ENCODE measurements at regions of chr2 and their contacts with region 1.

Region 1: GRCh38 chr2:64653349-64654062 is at the start of gene SERTAD2:
- DNase-seq: peak; percentile 70 to 90
- H3K4me3 ChIP-seq: peak within 1 kb of the TSS; percentile 98
- H3K27ac ChIP-seq: peak within 1 kb of the TSS; percentile 87
- H3K4me1 ChIP-seq: peaks cover 56% of the 10 kb centered on the region
- H3K27me3 ChIP-seq: no peaks in the 10 kb centered on the region
- CTCF ChIP-seq: peak; percentile 41; the same call in 1 of the 2 replicates
- total RNA-seq, gene SERTAD2: 27.3 and 31.4 TPM in 2 replicates

Region 2: GRCh38 chr2:64595397-64596160 is 57.9 kb before region 1 on chr2:
- CTCF ChIA-PET with region 1: no interaction called
- POLR2A ChIA-PET with region 1: no interaction called
- intact Hi-C with region 1: no loop called
- DNase-seq: peak in 1 of 2 experiments; percentile 55
- H3K4me3 ChIP-seq: no peak overlapping the region
- H3K27ac ChIP-seq: 0 out of 2 replicates have a peak overlapping the region, but pooled peaks have one; percentile 44
- H3K4me1 ChIP-seq: peaks cover 32% of the 10 kb centered on the region
- H3K27me3 ChIP-seq: no peaks in the 10 kb centered on the region
- CTCF ChIP-seq: no peak; the same call in 1 of the 2 replicates

Region 3: DNA sequence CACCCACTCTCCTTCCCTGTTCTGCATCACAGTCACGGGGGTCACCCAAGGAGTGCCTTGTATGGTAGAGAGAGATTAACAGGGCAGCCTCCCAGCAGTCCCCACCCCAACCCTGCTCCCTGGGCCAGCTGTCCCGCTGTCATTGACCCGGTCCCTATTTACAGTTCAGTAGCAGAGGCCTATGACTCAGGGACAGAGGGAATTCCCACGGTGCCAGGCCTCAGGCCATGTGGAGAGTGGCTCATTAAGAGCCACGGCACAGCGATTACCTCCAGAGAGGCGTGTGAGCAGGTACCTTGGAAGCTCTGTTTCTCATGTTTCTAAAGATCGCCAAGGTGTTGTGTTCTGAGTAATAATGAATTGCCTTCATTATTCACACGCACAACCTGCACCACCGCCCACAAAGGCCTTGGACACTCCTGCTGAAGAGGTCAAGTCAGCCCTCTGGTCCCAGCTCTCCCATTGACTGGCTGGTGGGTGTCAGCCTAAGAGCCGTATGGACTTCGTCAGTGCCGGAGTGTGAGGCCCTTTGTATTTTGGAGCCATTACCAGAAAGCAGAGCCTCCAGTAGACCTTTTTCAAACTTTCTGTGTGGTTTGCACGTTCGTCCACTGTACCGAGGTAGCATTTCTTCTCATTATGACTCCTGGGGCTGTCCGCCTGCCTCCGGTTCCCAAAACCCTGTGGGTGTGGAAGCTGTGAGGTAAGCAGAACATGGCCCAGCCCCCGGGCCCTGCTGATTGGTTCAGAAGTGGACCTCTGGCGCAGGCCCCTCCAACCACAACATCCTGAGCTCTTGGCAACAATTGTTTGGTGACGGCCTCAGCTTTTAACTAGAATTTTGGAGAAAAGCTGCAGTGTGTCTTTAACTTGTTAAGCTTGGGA is 46.8 kb before region 1 on chr2:
- CTCF ChIA-PET with region 1: interaction called, 9 read pairs
- POLR2A ChIA-PET with region 1: interaction called, 5 read pairs
- intact Hi-C with region 1: loop called (anchors 1 kb)
- DNase-seq: peak; percentile 80 to 98
- H3K4me3 ChIP-seq: no peak overlapping the region; the same call in 1 of the 2 replicates
- H3K27ac ChIP-seq: peak overlapping the region; percentile 92
- H3K4me1 ChIP-seq: peaks cover 43% of the 10 kb centered on the region
- H3K27me3 ChIP-seq: no peaks in the 10 kb centered on the region
- CTCF ChIP-seq: no peak

Region 4: DNA sequence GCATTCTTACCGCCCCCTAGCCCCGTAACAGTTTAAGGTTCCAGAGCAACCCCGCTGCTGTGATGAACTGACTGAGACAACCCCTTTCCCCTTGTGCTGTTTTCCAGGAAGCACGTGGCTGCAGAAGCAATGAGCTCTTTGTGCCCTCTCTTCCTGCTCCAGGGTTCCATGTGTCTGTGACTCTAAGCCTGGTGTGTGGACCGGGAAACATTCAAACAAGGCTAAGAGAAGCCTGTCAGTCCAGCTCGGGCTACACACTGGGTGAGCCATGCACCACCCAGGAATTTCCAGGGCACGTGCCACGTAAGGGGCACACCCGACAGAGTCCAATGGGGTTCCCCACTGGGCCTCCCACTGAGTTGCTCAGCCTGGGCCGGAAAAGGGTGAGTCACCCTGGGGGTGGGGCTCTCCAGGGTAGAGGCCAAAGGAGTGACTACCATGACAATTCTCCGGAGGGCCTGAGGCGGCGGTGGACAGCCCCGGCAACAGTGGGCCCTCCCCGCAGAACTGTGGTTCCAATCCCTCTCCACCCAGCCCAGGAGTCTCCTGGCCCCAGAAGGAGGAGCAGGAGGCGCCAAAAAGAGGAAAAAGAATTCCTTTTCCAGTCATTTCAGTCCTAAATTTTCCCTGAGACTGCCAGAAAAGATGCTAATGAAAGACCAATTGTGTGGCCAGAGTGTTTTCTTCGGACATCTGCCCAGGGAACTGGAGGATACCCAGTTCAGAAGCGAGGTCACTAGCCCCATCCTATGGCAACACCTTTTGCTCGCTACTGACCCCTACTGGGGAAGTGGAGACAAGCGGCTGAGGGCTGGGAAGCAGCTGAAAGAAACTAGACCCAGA is 177.8 kb after region 1 on chr2:
- CTCF ChIA-PET with region 1: interaction called, 13 read pairs
- POLR2A ChIA-PET with region 1: interaction called, 18 read pairs
- intact Hi-C with region 1: loop called (anchors 1 kb)
- DNase-seq: peak; percentile 99 to 100
- H3K4me3 ChIP-seq: peak overlapping the region; percentile 36; the same call in 1 of the 2 replicates
- H3K27ac ChIP-seq: peak overlapping the region; percentile 83
- H3K4me1 ChIP-seq: peaks cover 53% of the 10 kb centered on the region
- H3K27me3 ChIP-seq: no peaks in the 10 kb centered on the region
- CTCF ChIP-seq: peak; percentile 99

Region 5: GRCh38 chr2:64873472-64873924 is 220.0 kb after region 1 on chr2:
- CTCF ChIA-PET with region 1: interaction called, 13 read pairs
- POLR2A ChIA-PET with region 1: no interaction called
- intact Hi-C with region 1: loop called (anchors 2 kb)
- DNase-seq: peak; percentile 66 to 88
- H3K4me3 ChIP-seq: no peak overlapping the region
- H3K27ac ChIP-seq: no peak overlapping the region
- H3K4me1 ChIP-seq: peaks cover 26% of the 10 kb centered on the region
- H3K27me3 ChIP-seq: no peaks in the 10 kb centered on the region
- CTCF ChIP-seq: peak; percentile 99